ENCODE measurements at regions of chr6 and their contacts with region 1.

Region 1: GRCh38 chr6:105097288-105097687 is 82.5 kb downstream of the POPDC3 start:
- DNase-seq: no peak
- H3K4me3 ChIP-seq: no peak overlapping the region
- H3K27ac ChIP-seq: no peak overlapping the region
- H3K4me1 ChIP-seq: no peaks in the 10 kb centered on the region
- H3K27me3 ChIP-seq: no peaks in the 10 kb centered on the region
- CTCF ChIP-seq: no peak
- POLR2A ChIP-seq: no peak

Region 2: GRCh38 chr6:105363100-105363754 is 265.9 kb after region 1 on chr6:
- intact Hi-C with region 1: no loop called
- DNase-seq: no peak
- H3K4me3 ChIP-seq: no peak overlapping the region
- H3K27ac ChIP-seq: peak overlapping the region; percentile 5 to 8
- H3K4me1 ChIP-seq: no peaks in the 10 kb centered on the region
- H3K27me3 ChIP-seq: no peaks in the 10 kb centered on the region
- CTCF ChIP-seq: no peak
- POLR2A ChIP-seq: no peak

Region 3: GRCh38 chr6:105402939-105403935 is 305.9 kb after region 1 on chr6 and contains the start of gene PREP:
- intact Hi-C with region 1: loop called (anchors 10 kb)
- DNase-seq: peak; percentile 74 to 81
- H3K4me3 ChIP-seq: peak within 1 kb of the TSS; percentile 79 to 94 (median 83)
- H3K27ac ChIP-seq: peak within 1 kb of the TSS; percentile 84 to 92
- H3K4me1 ChIP-seq: peaks cover 0 to 2% of the 10 kb centered on the region in 2 donors
- H3K27me3 ChIP-seq: no peaks in the 10 kb centered on the region
- CTCF ChIP-seq: peak; percentile 79 to 89 (median 87)
- POLR2A ChIP-seq: no peak
- total RNA-seq, gene PREP: 18.4 to 22.3 (median 19.6) TPM

Measured in breast epithelium (tissue), 4 donors.